Heart right ventricle (tissue), 16 donors: ENCODE measurements at regions of chr5 and their contacts with region 1.

Region 1: GRCh38 chr5:73088026-73088425 is 32.3 kb upstream of the TMEM171 start:
- DNase-seq: no peak
- ATAC-seq: no peak
- H3K4me3 ChIP-seq: no peak overlapping the region
- H3K27ac ChIP-seq: no peak overlapping the region
- H3K4me1 ChIP-seq: no peaks in the 10 kb centered on the region
- H3K27me3 ChIP-seq: no peaks in the 10 kb centered on the region
- CTCF ChIP-seq: no peak

Region 2: GRCh38 chr5:73437101-73437776 is 349.2 kb after region 1 on chr5:
- intact Hi-C with region 1: loop called in 2 of 10 experiments (anchors 5 to 10 kb)
- DNase-seq: peak in 1 of 2 donors; percentile 21
- ATAC-seq: peak in 3 of 8 donors; percentile 29 to 60 (median 42)
- H3K4me3 ChIP-seq: peak overlapping the region in 9 of 10 donors; percentile 5 to 32 (median 16)
- H3K27ac ChIP-seq: no peak overlapping the region
- H3K4me1 ChIP-seq: peaks cover 0 to 19% (median 14%) of the 10 kb centered on the region in 9 donors
- H3K27me3 ChIP-seq: peaks cover 37 to 100% (median 99%) of the 10 kb centered on the region in 7 donors
- CTCF ChIP-seq: no peak

Region 3: DNA sequence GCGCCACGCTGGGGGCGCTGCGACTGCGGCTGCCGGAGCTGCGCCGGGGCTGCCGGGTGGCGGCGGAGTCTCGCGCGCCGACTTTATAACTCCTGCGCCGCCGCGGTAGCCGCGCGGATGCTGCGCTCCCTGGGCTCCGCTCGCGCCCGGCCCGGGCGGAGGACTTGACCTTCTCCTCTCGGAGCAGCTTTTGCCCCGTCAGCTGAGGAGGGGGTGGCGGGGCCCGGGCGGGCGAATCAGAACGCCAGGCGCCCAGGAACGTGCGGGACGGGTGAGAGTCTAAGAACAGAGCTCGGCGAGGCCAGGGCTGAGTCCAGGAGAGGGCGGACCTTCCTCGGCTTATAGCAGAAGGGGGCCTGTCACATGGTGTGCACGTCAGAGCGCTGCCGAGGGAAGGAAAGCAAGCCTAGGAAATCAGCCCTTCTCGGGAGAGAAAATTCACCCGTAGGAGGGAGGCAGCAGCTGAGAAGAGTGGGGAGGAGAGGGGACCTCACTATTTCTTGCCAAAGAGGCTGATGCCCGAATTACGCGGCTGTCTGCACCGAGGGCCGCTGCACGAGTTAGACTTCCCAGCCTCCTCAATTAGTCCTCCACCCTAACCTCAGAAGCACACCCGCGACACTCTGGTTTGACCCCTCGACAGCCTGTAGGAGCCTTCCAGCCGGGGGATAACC is 360.6 kb after region 1 on chr5 and contains the start of gene FOXD1:
- intact Hi-C with region 1: loop called in 4 of 10 experiments (anchors 5 to 10 kb)
- DNase-seq: peak; percentile 45 to 59
- ATAC-seq: peak; percentile 72 to 89 (median 79)
- H3K4me3 ChIP-seq: peak within 1 kb of the TSS; percentile 23 to 64 (median 46)
- H3K27ac ChIP-seq: peak within 1 kb of the TSS in 1 of 10 donors; percentile 50
- H3K4me1 ChIP-seq: peaks cover 7 to 47% (median 19%) of the 10 kb centered on the region in 9 donors
- H3K27me3 ChIP-seq: peaks cover 63 to 94% (median 92%) of the 10 kb centered on the region in 7 donors
- CTCF ChIP-seq: peak in 1 of 9 donors; percentile 5
- total RNA-seq, gene FOXD1: 0.10 to 0.15 (median 0.13) TPM in 4 of 10 donors, not detected in the others

Region 4: GRCh38 chr5:73454351-73455036 is 366.5 kb after region 1 on chr5:
- intact Hi-C with region 1: loop called in 4 of 10 experiments (anchors 5 to 10 kb)
- DNase-seq: no peak
- ATAC-seq: peak in 1 of 8 donors; percentile 59
- H3K4me3 ChIP-seq: no peak overlapping the region
- H3K27ac ChIP-seq: no peak overlapping the region
- H3K4me1 ChIP-seq: peaks cover 3 to 16% (median 8%) of the 10 kb centered on the region in 9 donors
- H3K27me3 ChIP-seq: peaks cover 25 to 97% (median 95%) of the 10 kb centered on the region in 7 donors
- CTCF ChIP-seq: peak; percentile 36 to 76 (median 66)

Region 5: GRCh38 chr5:73534011-73534644 is 446.1 kb after region 1 on chr5:
- intact Hi-C with region 1: loop called in 1 of 10 experiments (anchors 10 kb)
- DNase-seq: no peak
- ATAC-seq: no peak
- H3K4me3 ChIP-seq: no peak overlapping the region
- H3K27ac ChIP-seq: no peak overlapping the region
- H3K4me1 ChIP-seq: no peaks in the 10 kb centered on the region
- H3K27me3 ChIP-seq: peaks cover 0 to 15% (median 5%) of the 10 kb centered on the region in 7 donors
- CTCF ChIP-seq: no peak